H1 (cell line): ENCODE measurements at regions of chr4 and their contacts with region 1.

Region 1: GRCh38 chr4:8176547-8177399 is 18.2 kb upstream of the ABLIM2 start:
- DNase-seq: peak; percentile 41 to 67
- H3K4me3 ChIP-seq: no peak overlapping the region
- H3K27ac ChIP-seq: no peak overlapping the region
- H3K4me1 ChIP-seq: no peaks in the 10 kb centered on the region
- H3K27me3 ChIP-seq: no peaks in the 10 kb centered on the region
- CTCF ChIP-seq: peak in 2 of 3 experiments; percentile 90 to 96; a peak in 3 of 4 replicates
- EP300 ChIP-seq: no peak
- POLR2A ChIP-seq: no peak
- RAD21 ChIP-seq: peak; percentile 88 to 91

Region 2: GRCh38 chr4:8110071-8110986 is 66.4 kb before region 1 on chr4:
- CTCF ChIA-PET with region 1: interaction called, 10 read pairs
- POLR2A ChIA-PET with region 1: no interaction called
- DNase-seq: peak; percentile 65 to 86
- H3K4me3 ChIP-seq: peak overlapping the region in 2 of 4 experiments; percentile 15 to 20; a peak in 1 of 8 replicates
- H3K27ac ChIP-seq: peak overlapping the region; percentile 65
- H3K4me1 ChIP-seq: peaks cover 12 to 29% (median 16%) of the 10 kb centered on the region in 4 experiments
- H3K27me3 ChIP-seq: no peaks in the 10 kb centered on the region
- CTCF ChIP-seq: peak in 2 of 3 experiments; percentile 75 to 98; a peak in 3 of 4 replicates
- EP300 ChIP-seq: peak in 1 of 2 experiments; percentile 98; a peak in 1 of 3 replicates
- POLR2A ChIP-seq: peak in 1 of 2 experiments; percentile 61; a peak in 2 of 3 replicates
- RAD21 ChIP-seq: peak; percentile 57 to 72

Region 3: GRCh38 chr4:8192748-8193738 is 16.3 kb after region 1 on chr4:
- CTCF ChIA-PET with region 1: interaction called, 22 read pairs
- POLR2A ChIA-PET with region 1: no interaction called
- DNase-seq: no peak
- H3K4me3 ChIP-seq: no peak overlapping the region
- H3K27ac ChIP-seq: no peak overlapping the region
- H3K4me1 ChIP-seq: peaks cover 0 to 6% (median 3%) of the 10 kb centered on the region in 4 experiments; a peak in 3 of 7 replicates
- H3K27me3 ChIP-seq: no peaks in the 10 kb centered on the region
- CTCF ChIP-seq: peak in 1 of 3 experiments; percentile 4; a peak in 2 of 4 replicates
- EP300 ChIP-seq: no peak
- POLR2A ChIP-seq: no peak
- RAD21 ChIP-seq: peak in 1 of 2 experiments; percentile 21; a peak in 1 of 4 replicates

Region 4: GRCh38 chr4:8205749-8206611 is 29.2 kb after region 1 on chr4:
- CTCF ChIA-PET with region 1: interaction called, 17 read pairs
- POLR2A ChIA-PET with region 1: no interaction called
- DNase-seq: no peak
- H3K4me3 ChIP-seq: no peak overlapping the region
- H3K27ac ChIP-seq: no peak overlapping the region
- H3K4me1 ChIP-seq: no peaks in the 10 kb centered on the region; a peak in 2 of 7 replicates
- H3K27me3 ChIP-seq: no peaks in the 10 kb centered on the region
- CTCF ChIP-seq: no peak
- EP300 ChIP-seq: no peak
- POLR2A ChIP-seq: no peak
- RAD21 ChIP-seq: no peak

Region 5: GRCh38 chr4:8228319-8229250 is 51.8 kb after region 1 on chr4:
- CTCF ChIA-PET with region 1: interaction called, 20 read pairs
- POLR2A ChIA-PET with region 1: no interaction called
- DNase-seq: no peak
- H3K4me3 ChIP-seq: no peak overlapping the region
- H3K27ac ChIP-seq: no peak overlapping the region
- H3K4me1 ChIP-seq: peaks cover 6 to 17% (median 11%) of the 10 kb centered on the region in 4 experiments
- H3K27me3 ChIP-seq: no peaks in the 10 kb centered on the region; a peak in 1 of 7 replicates
- CTCF ChIP-seq: no peak
- EP300 ChIP-seq: no peak
- POLR2A ChIP-seq: no peak
- RAD21 ChIP-seq: no peak

Region 6: GRCh38 chr4:8250227-8250626 is 73.5 kb after region 1 on chr4:
- CTCF ChIA-PET with region 1: interaction called, 10 read pairs
- POLR2A ChIA-PET with region 1: no interaction called
- DNase-seq: no peak
- H3K4me3 ChIP-seq: no peak overlapping the region
- H3K27ac ChIP-seq: no peak overlapping the region
- H3K4me1 ChIP-seq: no peaks in the 10 kb centered on the region
- H3K27me3 ChIP-seq: no peaks in the 10 kb centered on the region
- CTCF ChIP-seq: no peak
- EP300 ChIP-seq: no peak
- POLR2A ChIP-seq: no peak
- RAD21 ChIP-seq: no peak

Region 7: GRCh38 chr4:8362483-8362882 is 185.7 kb after region 1 on chr4:
- CTCF ChIA-PET with region 1: no interaction called
- POLR2A ChIA-PET with region 1: no interaction called
- DNase-seq: no peak
- H3K4me3 ChIP-seq: no peak overlapping the region
- H3K27ac ChIP-seq: no peak overlapping the region
- H3K4me1 ChIP-seq: peaks cover 2 to 15% (median 4%) of the 10 kb centered on the region in 4 experiments; a peak in 5 of 7 replicates
- H3K27me3 ChIP-seq: peaks cover 0 to 6% (median under 1%) of the 10 kb centered on the region in 4 experiments; a peak in 4 of 7 replicates
- CTCF ChIP-seq: no peak
- EP300 ChIP-seq: no peak
- POLR2A ChIP-seq: no peak
- RAD21 ChIP-seq: no peak